Heart right ventricle (tissue), 16 donors: ENCODE measurements at regions of chr13 and their contacts with region 1.

Region 1: GRCh38 chr13:31424117-31424729 is 224.4 kb downstream of the B3GLCT start:
- DNase-seq: peak; percentile 64 to 71
- ATAC-seq: peak; percentile 87 to 97 (median 92)
- H3K4me3 ChIP-seq: no peak overlapping the region
- H3K27ac ChIP-seq: no peak overlapping the region
- H3K4me1 ChIP-seq: peaks cover 0 to 10% (median 0%) of the 10 kb centered on the region in 9 donors
- H3K27me3 ChIP-seq: peaks cover 0 to 3% (median 0%) of the 10 kb centered on the region in 7 donors
- CTCF ChIP-seq: peak; percentile 71 to 94 (median 90)

Region 2: GRCh38 chr13:31174018-31174417 is 250.2 kb before region 1 on chr13:
- intact Hi-C with region 1: loop called in 6 of 10 experiments (anchors 5 to 10 kb)
- DNase-seq: no peak
- ATAC-seq: no peak
- H3K4me3 ChIP-seq: no peak overlapping the region
- H3K27ac ChIP-seq: no peak overlapping the region
- H3K4me1 ChIP-seq: peaks cover 0 to 4% (median 0%) of the 10 kb centered on the region in 9 donors
- H3K27me3 ChIP-seq: no peaks in the 10 kb centered on the region
- CTCF ChIP-seq: peak in 4 of 9 donors; percentile 27 to 38 (median 31)

Region 3: GRCh38 chr13:31199849-31200636 is 224.2 kb before region 1 on chr13 and contains the start of gene B3GLCT:
- intact Hi-C with region 1: loop called in 2 of 10 experiments (anchors 2 to 10 kb)
- DNase-seq: peak; percentile 65 to 85
- ATAC-seq: peak; percentile 86 to 90 (median 88)
- H3K4me3 ChIP-seq: peak within 1 kb of the TSS; percentile 55 to 86 (median 80)
- H3K27ac ChIP-seq: peak within 1 kb of the TSS; percentile 95 to 100 (median 98)
- H3K4me1 ChIP-seq: peaks cover 0 to 47% (median 34%) of the 10 kb centered on the region in 9 donors
- H3K27me3 ChIP-seq: no peaks in the 10 kb centered on the region
- CTCF ChIP-seq: peak; percentile 73 to 92 (median 87)
- total RNA-seq, gene B3GLCT: 12.0 to 28.1 (median 20.1) TPM

Region 4: DNA sequence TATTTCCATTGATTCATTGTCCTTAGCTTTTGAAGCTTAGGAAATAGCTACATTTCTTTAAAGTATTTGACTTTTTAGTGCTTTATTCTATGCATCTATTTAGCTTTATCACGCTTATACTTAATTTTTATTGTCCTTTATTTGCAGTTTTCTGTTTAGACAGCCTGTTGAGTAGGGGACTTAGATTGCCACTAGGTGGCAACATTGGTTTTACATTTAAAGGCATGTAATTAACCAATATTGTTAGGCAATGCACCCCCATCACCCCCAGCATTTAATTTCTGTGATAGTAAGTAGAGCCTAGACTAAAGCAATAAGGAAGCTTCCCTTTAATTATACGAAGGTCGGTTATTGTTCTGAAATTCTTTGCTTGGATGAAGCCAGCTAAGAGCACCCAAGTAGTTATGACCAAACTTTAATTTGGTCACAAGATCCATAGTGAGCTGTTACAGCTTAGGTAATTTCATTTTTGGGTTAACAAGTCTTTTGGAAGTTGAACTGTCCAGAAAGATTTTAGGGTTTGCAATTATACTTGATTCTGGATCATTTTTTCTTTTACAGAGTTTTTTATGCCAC is 187.9 kb before region 1 on chr13:
- intact Hi-C with region 1: loop called in 9 of 10 experiments (anchors 1 to 5 kb)
- DNase-seq: no peak
- ATAC-seq: peak in 4 of 8 donors; percentile 53 to 63 (median 58)
- H3K4me3 ChIP-seq: no peak overlapping the region
- H3K27ac ChIP-seq: no peak overlapping the region
- H3K4me1 ChIP-seq: no peaks in the 10 kb centered on the region
- H3K27me3 ChIP-seq: no peaks in the 10 kb centered on the region
- CTCF ChIP-seq: peak; percentile 47 to 77 (median 70)

Region 5: DNA sequence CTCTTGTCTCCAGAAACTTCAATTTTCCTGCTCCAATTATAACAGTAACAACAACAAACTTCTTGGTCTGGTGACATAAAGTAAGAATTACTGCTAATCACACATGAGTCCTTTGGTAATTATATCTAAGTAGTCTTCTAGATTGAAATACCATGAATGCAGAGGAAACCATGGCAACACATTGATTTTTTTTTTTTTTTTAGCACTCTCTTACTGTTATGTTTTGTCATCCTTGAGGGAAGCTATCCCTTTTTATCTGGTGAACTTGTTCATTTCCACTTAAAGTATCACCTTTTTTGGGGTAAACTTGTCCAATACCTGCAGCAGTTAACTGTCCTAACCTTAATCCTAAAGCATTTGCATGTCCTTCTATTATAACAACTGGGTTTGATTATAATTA is 31.8 kb after region 1 on chr13:
- intact Hi-C with region 1: no loop called
- DNase-seq: no peak
- ATAC-seq: no peak
- H3K4me3 ChIP-seq: no peak overlapping the region
- H3K27ac ChIP-seq: no peak overlapping the region
- H3K4me1 ChIP-seq: no peaks in the 10 kb centered on the region
- H3K27me3 ChIP-seq: peaks cover 0 to 4% (median 0%) of the 10 kb centered on the region in 7 donors
- CTCF ChIP-seq: no peak

Region 6: GRCh38 chr13:31476266-31476665 is 52.0 kb after region 1 on chr13:
- intact Hi-C with region 1: no loop called
- DNase-seq: no peak
- ATAC-seq: peak in 1 of 8 donors; percentile 68
- H3K4me3 ChIP-seq: no peak overlapping the region
- H3K27ac ChIP-seq: peak overlapping the region in 1 of 10 donors; percentile 41
- H3K4me1 ChIP-seq: peaks cover 0 to 11% (median 0%) of the 10 kb centered on the region in 9 donors
- H3K27me3 ChIP-seq: peaks cover 0 to 3% (median 0%) of the 10 kb centered on the region in 7 donors
- CTCF ChIP-seq: no peak

Region 7: DNA sequence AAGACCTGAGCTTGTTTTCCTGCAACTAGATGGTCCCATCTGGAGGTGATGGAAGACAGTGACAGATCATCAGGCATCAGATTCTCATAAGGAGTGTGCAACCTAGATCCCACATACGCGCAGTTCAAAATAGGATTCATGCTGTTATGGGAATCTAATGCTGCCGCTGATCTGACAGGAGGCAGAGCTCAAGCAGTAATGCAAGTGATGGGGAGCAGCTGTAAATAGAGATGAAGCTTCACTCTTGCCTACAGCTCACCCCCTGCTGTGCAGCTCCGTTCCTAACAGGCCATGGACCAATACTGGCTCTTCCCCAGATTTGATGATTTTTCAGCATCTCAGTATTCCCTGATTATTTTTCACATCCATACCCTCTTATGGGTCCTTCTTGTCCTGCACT is 106.7 kb after region 1 on chr13:
- intact Hi-C with region 1: no loop called
- DNase-seq: no peak
- ATAC-seq: no peak
- H3K4me3 ChIP-seq: no peak overlapping the region
- H3K27ac ChIP-seq: no peak overlapping the region
- H3K4me1 ChIP-seq: no peaks in the 10 kb centered on the region
- H3K27me3 ChIP-seq: peaks cover 0 to 6% (median 0%) of the 10 kb centered on the region in 7 donors
- CTCF ChIP-seq: no peak